ENCODE measurements at regions of chr5 and their contacts with region 1.

Region 1: DNA sequence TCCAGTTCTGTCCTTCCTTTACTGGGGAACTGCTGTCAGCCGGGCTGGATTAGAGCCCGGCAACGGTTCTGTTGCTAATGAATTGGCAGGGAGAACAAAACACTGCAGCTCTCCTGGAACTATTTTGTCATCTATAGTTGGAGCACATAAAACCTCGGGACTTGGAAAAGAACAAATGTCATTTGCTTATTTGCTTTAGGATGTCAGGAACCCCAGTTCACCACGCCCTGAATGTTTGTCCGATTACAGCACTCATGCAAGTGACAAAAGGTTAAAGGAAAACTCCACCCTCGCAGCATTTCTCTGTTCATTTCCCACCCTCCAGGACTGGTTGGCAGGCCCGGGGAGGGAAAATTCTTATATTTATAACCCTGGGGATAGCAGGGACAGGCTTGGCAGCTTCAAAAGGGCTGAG is 66.4 kb upstream of the PLPP1 start:
- DNase-seq: peak; percentile 85
- ATAC-seq: peak; percentile 87
- H3K4me3 ChIP-seq: peak overlapping the region; percentile 51; the same call in 1 of the 2 replicates
- H3K27ac ChIP-seq: peak overlapping the region; percentile 95
- H3K4me1 ChIP-seq: peaks cover 53% of the 10 kb centered on the region
- H3K27me3 ChIP-seq: no peaks in the 10 kb centered on the region
- CTCF ChIP-seq: no peak

Region 2: DNA sequence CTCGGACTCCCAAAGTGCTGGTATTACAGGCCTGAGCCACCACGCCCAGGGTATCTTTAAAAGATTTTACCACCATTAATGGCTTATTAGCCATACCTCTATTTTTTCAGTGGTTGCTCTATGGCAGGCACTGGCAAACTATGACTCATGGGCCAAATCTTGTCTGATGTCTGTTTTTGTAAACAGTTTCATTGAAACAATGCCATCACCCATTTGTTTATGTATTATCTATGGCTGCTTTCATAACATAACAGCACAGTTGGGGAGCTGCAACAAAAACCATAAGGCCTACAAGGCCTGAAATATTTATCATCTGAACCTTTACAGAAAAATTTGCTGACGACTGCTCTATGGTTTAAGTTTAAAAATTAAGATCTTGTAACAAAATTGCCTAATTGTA is 44.1 kb after region 1 on chr5:
- CTCF ChIA-PET with region 1: no interaction called
- POLR2A ChIA-PET with region 1: no interaction called
- intact Hi-C with region 1: no loop called
- DNase-seq: peak; percentile 16
- ATAC-seq: peak; percentile 38; the same call in 1 of the 2 replicates
- H3K4me3 ChIP-seq: no peak overlapping the region
- H3K27ac ChIP-seq: no peak overlapping the region
- H3K4me1 ChIP-seq: no peaks in the 10 kb centered on the region
- H3K27me3 ChIP-seq: no peaks in the 10 kb centered on the region
- CTCF ChIP-seq: no peak

Region 3: GRCh38 chr5:55657443-55657842 is 56.2 kb after region 1 on chr5:
- CTCF ChIA-PET with region 1: no interaction called
- POLR2A ChIA-PET with region 1: no interaction called
- intact Hi-C with region 1: loop called (anchors 5 kb)
- DNase-seq: peak; percentile 51
- ATAC-seq: peak; percentile 95
- H3K4me3 ChIP-seq: no peak overlapping the region
- H3K27ac ChIP-seq: no peak overlapping the region
- H3K4me1 ChIP-seq: peaks cover 8% of the 10 kb centered on the region; the same call in 1 of the 2 replicates
- H3K27me3 ChIP-seq: no peaks in the 10 kb centered on the region
- CTCF ChIP-seq: no peak